ENCODE measurements at regions of chr4 and their contacts with region 1.

Region 1: GRCh38 chr4:40576631-40577480 is 52.8 kb downstream of the RBM47 start:
- DNase-seq: peak; percentile 99 to 100 (median 100)
- H3K4me3 ChIP-seq: peak overlapping the region in 1 of 3 experiments; percentile 12
- H3K4me3 Mint-ChIP-seq: peak overlapping the region; percentile 24 to 59
- H3K27ac ChIP-seq: peak overlapping the region; percentile 86 to 97
- H3K27ac Mint-ChIP-seq: peak overlapping the region; percentile 93 to 100 (median 99)
- H3K4me1 ChIP-seq: peaks cover 67% of the 10 kb centered on the region in 2 donors
- H3K4me1 Mint-ChIP-seq: peaks cover 76% of the 10 kb centered on the region
- H3K27me3 ChIP-seq: no peaks in the 10 kb centered on the region
- H3K27me3 Mint-ChIP-seq: peaks cover 0 to 2% (median 0%) of the 10 kb centered on the region in 3 donors
- CTCF ChIP-seq: no peak

Region 2: DNA sequence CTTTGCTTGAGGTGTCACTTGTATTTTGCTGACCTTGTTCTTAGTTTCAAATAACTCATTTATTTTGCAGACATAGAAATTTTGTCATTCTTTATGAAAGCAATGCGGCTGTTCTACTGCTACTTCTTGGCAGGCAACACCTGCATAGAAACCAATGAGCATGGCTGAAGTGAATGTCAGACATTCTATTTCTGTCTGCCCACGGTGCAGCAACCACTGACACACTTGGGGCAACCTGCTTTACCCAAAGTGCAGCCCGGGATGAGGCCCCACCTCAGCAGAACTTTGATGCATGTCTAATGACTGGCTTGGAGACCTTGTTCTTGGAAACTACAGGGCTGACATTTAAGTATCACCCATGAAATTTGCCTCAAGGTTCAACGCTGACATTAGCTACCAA is 40.8 kb before region 1 on chr4:
- intact Hi-C with region 1: no loop called
- DNase-seq: no peak
- H3K4me3 ChIP-seq: no peak overlapping the region
- H3K4me3 Mint-ChIP-seq: no peak overlapping the region
- H3K27ac ChIP-seq: peak overlapping the region in 1 of 2 donors; percentile 54
- H3K27ac Mint-ChIP-seq: peak overlapping the region in 3 of 7 donors; percentile 46 to 68 (median 54)
- H3K4me1 ChIP-seq: no peaks in the 10 kb centered on the region
- H3K4me1 Mint-ChIP-seq: no peaks in the 10 kb centered on the region
- H3K27me3 ChIP-seq: no peaks in the 10 kb centered on the region
- H3K27me3 Mint-ChIP-seq: no peaks in the 10 kb centered on the region
- CTCF ChIP-seq: no peak

Region 3: DNA sequence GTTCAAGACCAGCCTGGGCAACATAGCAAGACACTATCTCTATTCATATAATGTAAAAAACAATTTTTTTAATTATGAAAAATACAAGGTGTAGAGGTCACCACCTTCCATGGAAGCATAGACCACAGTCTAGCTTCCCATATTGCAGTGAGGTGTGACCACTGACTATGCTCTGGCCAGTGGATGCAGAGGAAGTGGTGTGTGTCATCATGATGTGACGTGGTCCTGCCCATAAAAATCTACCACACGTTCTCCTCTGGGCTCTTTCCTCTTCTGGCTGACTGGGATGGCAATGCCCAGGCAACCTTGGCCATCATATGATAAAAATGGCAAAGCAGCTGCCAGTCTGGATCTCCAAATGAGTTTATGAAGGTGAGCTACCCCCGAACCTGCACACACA is 12.9 kb before region 1 on chr4:
- intact Hi-C with region 1: loop called in 1 of 2 experiments (anchors 2 kb)
- DNase-seq: peak; percentile 89 to 96 (median 95)
- H3K4me3 ChIP-seq: no peak overlapping the region
- H3K4me3 Mint-ChIP-seq: no peak overlapping the region
- H3K27ac ChIP-seq: peak overlapping the region; percentile 88 to 98
- H3K27ac Mint-ChIP-seq: peak overlapping the region; percentile 96 to 99 (median 97)
- H3K4me1 ChIP-seq: peaks cover 69 to 76% of the 10 kb centered on the region in 2 donors
- H3K4me1 Mint-ChIP-seq: peaks cover 77% of the 10 kb centered on the region
- H3K27me3 ChIP-seq: no peaks in the 10 kb centered on the region
- H3K27me3 Mint-ChIP-seq: peaks cover 1 to 3% (median 1%) of the 10 kb centered on the region in 3 donors
- CTCF ChIP-seq: no peak

Region 4: DNA sequence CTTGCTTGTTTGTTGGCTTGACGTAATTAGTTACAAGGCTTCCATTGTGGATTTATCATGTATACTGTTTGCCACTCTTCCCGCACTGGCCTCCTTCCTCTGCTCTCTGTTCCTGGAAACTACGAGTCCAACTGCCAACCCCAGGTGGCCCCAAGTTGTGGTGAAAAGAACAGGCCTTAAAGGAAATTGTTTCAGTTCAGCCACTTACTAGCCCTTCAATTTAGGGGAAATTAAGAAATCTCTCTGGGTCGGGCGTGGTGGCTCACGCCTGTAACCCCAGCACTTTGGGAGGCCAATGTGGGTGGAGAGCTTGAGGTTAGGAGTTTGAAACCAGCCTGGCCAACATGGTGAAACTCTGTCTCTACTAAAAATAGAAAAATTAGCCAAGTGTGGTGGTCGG is 24.8 kb after region 1 on chr4:
- intact Hi-C with region 1: loop called in 1 of 2 experiments (anchors 2 kb)
- DNase-seq: peak; percentile 57 to 70 (median 60)
- H3K4me3 ChIP-seq: peak overlapping the region in 1 of 3 experiments; percentile 38
- H3K4me3 Mint-ChIP-seq: peak overlapping the region; percentile 1 to 15
- H3K27ac ChIP-seq: peak overlapping the region; percentile 79 to 95
- H3K27ac Mint-ChIP-seq: peak overlapping the region; percentile 94 to 99 (median 97)
- H3K4me1 ChIP-seq: peaks cover 59 to 73% of the 10 kb centered on the region in 2 donors
- H3K4me1 Mint-ChIP-seq: peaks cover 56% of the 10 kb centered on the region
- H3K27me3 ChIP-seq: no peaks in the 10 kb centered on the region
- H3K27me3 Mint-ChIP-seq: peaks cover 0 to 3% (median 0%) of the 10 kb centered on the region in 3 donors
- CTCF ChIP-seq: no peak

Region 5: GRCh38 chr4:40629401-40630334 is 52.8 kb after region 1 on chr4 and contains the start of gene RBM47:
- intact Hi-C with region 1: loop called in 1 of 2 experiments (anchors 10 kb)
- DNase-seq: peak; percentile 62 to 75 (median 66)
- H3K4me3 ChIP-seq: peak within 1 kb of the TSS; percentile 91 to 99 (median 97)
- H3K4me3 Mint-ChIP-seq: peak within 1 kb of the TSS; percentile 98 to 100
- H3K27ac ChIP-seq: peak within 1 kb of the TSS; percentile 97 to 100
- H3K27ac Mint-ChIP-seq: peak within 1 kb of the TSS; percentile 99 to 100 (median 99)
- H3K4me1 ChIP-seq: peaks cover 51 to 70% of the 10 kb centered on the region in 2 donors
- H3K4me1 Mint-ChIP-seq: peaks cover 59% of the 10 kb centered on the region
- H3K27me3 ChIP-seq: no peaks in the 10 kb centered on the region
- H3K27me3 Mint-ChIP-seq: peaks cover 0 to 3% (median 0%) of the 10 kb centered on the region in 3 donors
- CTCF ChIP-seq: peak; percentile 32
- polyA plus RNA-seq, gene RBM47: 79.5 to 101 (median 92.8) TPM

Region 6: GRCh38 chr4:40924096-40924792 is 347.4 kb after region 1 on chr4:
- intact Hi-C with region 1: no loop called
- DNase-seq: peak; percentile 39 to 61 (median 61)
- H3K4me3 ChIP-seq: no peak overlapping the region
- H3K4me3 Mint-ChIP-seq: peak overlapping the region; percentile 53
- H3K27ac ChIP-seq: no peak overlapping the region
- H3K27ac Mint-ChIP-seq: peak overlapping the region in 2 of 7 donors; percentile 21 to 74
- H3K4me1 ChIP-seq: peaks cover 0 to 2% of the 10 kb centered on the region in 2 donors
- H3K4me1 Mint-ChIP-seq: peaks cover 5% of the 10 kb centered on the region
- H3K27me3 ChIP-seq: no peaks in the 10 kb centered on the region
- H3K27me3 Mint-ChIP-seq: peaks cover 0 to 5% (median 0%) of the 10 kb centered on the region in 3 donors
- CTCF ChIP-seq: peak; percentile 97

Measured in CD14-positive monocyte (primary cell).